AG04449 (cell line): ENCODE measurements at regions of chr2 and their contacts with region 1.

Region 1: GRCh38 chr2:134454931-134455330 is 201.1 kb downstream of the MGAT5 start:
- DNase-seq: no peak
- H3K4me3 ChIP-seq: no peak overlapping the region
- CTCF ChIP-seq: no peak

Region 2: DNA sequence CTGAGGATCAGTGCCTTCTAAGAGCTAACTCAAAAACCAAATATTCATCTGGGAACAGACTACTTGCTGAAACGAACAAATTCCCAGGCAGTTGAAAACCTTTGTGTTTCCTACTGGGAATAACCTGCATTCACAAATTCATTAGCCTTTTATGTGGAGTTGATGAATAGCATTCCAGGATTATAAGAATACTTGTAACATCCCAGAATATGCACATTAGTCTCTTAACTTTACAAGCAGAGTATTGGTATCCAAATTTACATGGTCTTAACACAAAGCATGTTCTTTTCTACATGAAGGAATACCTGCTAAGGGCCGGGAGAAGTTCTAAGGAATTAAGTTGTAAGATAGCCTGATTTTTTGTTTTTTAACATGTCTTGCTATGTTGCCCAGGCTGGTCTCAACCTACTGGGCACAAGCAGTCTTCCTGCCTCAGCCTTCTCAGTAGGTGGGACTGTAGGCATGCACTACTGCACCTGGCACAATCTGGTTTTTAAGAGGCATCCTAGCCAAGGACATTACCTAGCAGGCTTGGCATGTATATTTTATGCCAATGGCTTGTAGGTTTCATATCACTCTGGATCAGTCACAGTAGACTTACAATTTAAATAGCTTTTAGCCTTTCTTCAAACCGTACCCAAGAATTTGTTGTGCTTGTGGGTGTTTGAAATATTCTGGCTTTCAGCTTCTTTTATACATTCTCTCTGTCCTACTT is 150.4 kb before region 1 on chr2:
- CTCF ChIA-PET with region 1: interaction called, 14 read pairs
- POLR2A ChIA-PET with region 1: no interaction called
- DNase-seq: no peak
- H3K4me3 ChIP-seq: no peak overlapping the region
- CTCF ChIP-seq: no peak

Region 3: GRCh38 chr2:134368009-134368817 is 86.7 kb before region 1 on chr2:
- CTCF ChIA-PET with region 1: interaction called, 122 read pairs
- POLR2A ChIA-PET with region 1: no interaction called
- DNase-seq: no peak
- H3K4me3 ChIP-seq: no peak overlapping the region
- CTCF ChIP-seq: no peak

Region 4: GRCh38 chr2:134411828-134412638 is 42.9 kb before region 1 on chr2:
- CTCF ChIA-PET with region 1: interaction called, 52 read pairs
- POLR2A ChIA-PET with region 1: no interaction called
- DNase-seq: no peak
- H3K4me3 ChIP-seq: no peak overlapping the region
- CTCF ChIP-seq: peak; percentile 86

Region 5: DNA sequence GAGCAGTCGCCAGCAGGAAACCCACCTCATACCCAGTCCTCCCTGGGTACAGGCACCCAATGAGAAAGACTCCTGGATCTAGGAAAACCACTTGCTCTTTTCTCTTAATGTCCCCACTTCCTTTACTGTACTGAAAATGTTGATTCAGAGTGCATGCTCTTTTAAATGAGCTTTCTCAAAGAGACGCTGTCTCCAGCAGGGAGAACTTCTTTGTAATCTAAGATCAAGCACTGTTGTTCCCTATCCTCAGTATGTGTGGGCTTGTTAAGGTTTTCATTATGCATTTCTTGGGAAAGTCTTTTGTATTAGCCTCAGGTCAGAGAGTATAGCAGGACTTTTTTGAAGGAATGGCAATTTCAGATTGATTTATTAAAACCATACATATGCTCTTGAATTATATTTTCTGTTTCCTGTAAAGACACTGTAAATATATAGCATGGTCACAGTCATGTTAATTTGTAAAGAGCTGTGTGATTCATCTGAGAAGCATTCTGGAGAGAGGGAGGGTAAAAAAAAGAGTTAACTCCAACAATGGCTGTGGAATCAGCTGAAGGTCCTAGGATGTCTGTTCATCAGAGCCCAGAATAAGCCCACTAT is 23.0 kb before region 1 on chr2:
- CTCF ChIA-PET with region 1: interaction called, 78 read pairs
- POLR2A ChIA-PET with region 1: no interaction called
- DNase-seq: no peak
- H3K4me3 ChIP-seq: no peak overlapping the region
- CTCF ChIP-seq: no peak

Region 6: GRCh38 chr2:134508391-134508790 is 53.5 kb after region 1 on chr2:
- CTCF ChIA-PET with region 1: no interaction called
- POLR2A ChIA-PET with region 1: no interaction called
- DNase-seq: no peak
- H3K4me3 ChIP-seq: no peak overlapping the region
- CTCF ChIP-seq: no peak

Region 7: GRCh38 chr2:134897932-134898331 is 443.0 kb after region 1 on chr2:
- CTCF ChIA-PET with region 1: interaction called, 28 read pairs
- POLR2A ChIA-PET with region 1: no interaction called
- DNase-seq: no peak
- H3K4me3 ChIP-seq: no peak overlapping the region
- CTCF ChIP-seq: no peak